Common myeloid progenitor, CD34-positive (primary cell): ENCODE measurements at regions of chr1 and their contacts with region 1.

Region 1: GRCh38 chr1:206479183-206480125 is 9.2 kb downstream of the IKBKE start:
- DNase-seq: peak; percentile 75 to 88 (median 82)
- H3K4me3 ChIP-seq: no peak overlapping the region
- H3K27ac ChIP-seq: no peak overlapping the region
- H3K4me1 ChIP-seq: peaks cover 0 to 4% (median under 1%) of the 10 kb centered on the region in 4 experiments
- H3K27me3 ChIP-seq: no peaks in the 10 kb centered on the region

Region 2: GRCh38 chr1:206461602-206462455 is 17.6 kb before region 1 on chr1:
- CTCF ChIA-PET with region 1: interaction called, 69 read pairs
- POLR2A ChIA-PET with region 1: no interaction called
- DNase-seq: peak; percentile 60 to 81 (median 75)
- H3K4me3 ChIP-seq: no peak overlapping the region
- H3K27ac ChIP-seq: no peak overlapping the region
- H3K4me1 ChIP-seq: peaks cover 3 to 46% (median 20%) of the 10 kb centered on the region in 4 experiments
- H3K27me3 ChIP-seq: no peaks in the 10 kb centered on the region

Region 3: GRCh38 chr1:206489980-206490770 is 10.7 kb after region 1 on chr1:
- CTCF ChIA-PET with region 1: interaction called, 51 read pairs
- POLR2A ChIA-PET with region 1: interaction called, 4 read pairs
- DNase-seq: peak; percentile 60 to 78 (median 70)
- H3K4me3 ChIP-seq: no peak overlapping the region
- H3K27ac ChIP-seq: no peak overlapping the region
- H3K4me1 ChIP-seq: peaks cover 0 to 6% (median 3%) of the 10 kb centered on the region in 4 experiments
- H3K27me3 ChIP-seq: no peaks in the 10 kb centered on the region

Region 4: GRCh38 chr1:206496131-206496793 is 16.8 kb after region 1 on chr1:
- CTCF ChIA-PET with region 1: interaction called, 51 read pairs
- POLR2A ChIA-PET with region 1: no interaction called
- DNase-seq: no peak
- H3K4me3 ChIP-seq: no peak overlapping the region
- H3K27ac ChIP-seq: no peak overlapping the region
- H3K4me1 ChIP-seq: peaks cover 4 to 19% (median 15%) of the 10 kb centered on the region in 4 experiments
- H3K27me3 ChIP-seq: no peaks in the 10 kb centered on the region

Region 5: DNA sequence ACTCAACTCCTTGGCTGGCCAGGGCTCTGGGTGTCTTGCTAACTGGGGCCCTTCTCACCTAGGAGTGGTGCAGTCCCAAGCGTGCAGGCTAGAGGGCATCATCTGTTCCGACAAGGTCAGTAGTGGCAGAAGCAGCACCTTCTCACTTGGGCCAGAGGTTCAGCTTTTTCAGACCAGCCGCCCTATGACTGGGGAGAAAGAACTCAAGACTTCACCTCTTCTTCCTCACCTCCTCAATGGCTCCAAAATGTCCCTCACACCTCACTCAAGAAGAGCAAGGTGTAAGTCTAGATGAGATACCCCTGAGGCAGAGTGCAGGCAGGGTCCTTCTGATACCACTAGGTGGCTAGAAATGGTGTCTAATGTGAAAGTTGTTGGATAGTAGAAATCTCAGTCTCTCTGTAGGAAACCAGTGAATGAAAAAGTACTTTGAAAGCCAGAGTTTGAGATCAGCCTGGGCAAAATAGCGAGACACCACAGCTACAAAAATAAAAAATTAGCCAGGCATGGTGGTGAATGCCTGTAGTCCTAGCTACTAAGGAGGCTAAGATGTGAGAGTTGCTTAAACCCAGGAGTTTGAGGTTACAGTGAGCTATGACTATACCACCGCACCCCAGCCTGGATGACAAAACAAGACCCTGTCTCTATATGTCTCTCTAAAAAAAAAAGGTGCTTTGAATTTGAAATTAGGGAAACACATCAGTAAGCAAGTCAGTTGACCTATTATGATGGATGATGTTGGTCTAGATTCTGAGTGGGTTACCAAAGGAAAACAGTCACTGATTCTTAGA is 377.4 kb after region 1 on chr1:
- CTCF ChIA-PET with region 1: no interaction called
- POLR2A ChIA-PET with region 1: no interaction called
- DNase-seq: peak in 2 of 3 donors; percentile 22 to 27
- H3K4me3 ChIP-seq: no peak overlapping the region
- H3K27ac ChIP-seq: no peak overlapping the region
- H3K4me1 ChIP-seq: no peaks in the 10 kb centered on the region
- H3K27me3 ChIP-seq: no peaks in the 10 kb centered on the region